ENCODE measurements at regions of chr1 and their contacts with region 1.

Region 1: GRCh38 chr1:244864253-244865027 is at the start of gene HNRNPU:
- DNase-seq: peak; percentile 98
- ATAC-seq: peak; percentile 72
- H3K4me3 Mint-ChIP-seq: peak within 1 kb of the TSS; percentile 100
- H3K27ac Mint-ChIP-seq: peak within 1 kb of the TSS; percentile 99
- H3K4me1 Mint-ChIP-seq: peaks cover 33% of the 10 kb centered on the region
- H3K27me3 Mint-ChIP-seq: no peaks in the 10 kb centered on the region
- total RNA-seq, gene HNRNPU: 521 to 532 TPM

Region 2: GRCh38 chr1:244451951-244452795 is 412.3 kb before region 1 on chr1:
- CTCF ChIA-PET with region 1: no interaction called
- POLR2A ChIA-PET with region 1: no interaction called
- intact Hi-C with region 1: loop called (anchors 1 kb)
- DNase-seq: peak; percentile 99
- ATAC-seq: peak; percentile 91
- H3K4me3 Mint-ChIP-seq: peak overlapping the region; percentile 97
- H3K27ac Mint-ChIP-seq: peak overlapping the region; percentile 97
- H3K4me1 Mint-ChIP-seq: peaks cover 40% of the 10 kb centered on the region
- H3K27me3 Mint-ChIP-seq: no peaks in the 10 kb centered on the region

Region 3: GRCh38 chr1:244896550-244896949 is 32.1 kb after region 1 on chr1:
- CTCF ChIA-PET with region 1: no interaction called
- POLR2A ChIA-PET with region 1: interaction called, 10 read pairs
- intact Hi-C with region 1: no loop called
- DNase-seq: no peak
- ATAC-seq: no peak
- H3K4me3 Mint-ChIP-seq: no peak overlapping the region
- H3K27ac Mint-ChIP-seq: no peak overlapping the region
- H3K4me1 Mint-ChIP-seq: no peaks in the 10 kb centered on the region
- H3K27me3 Mint-ChIP-seq: no peaks in the 10 kb centered on the region

Region 4: GRCh38 chr1:244980605-244981004 is 116.2 kb after region 1 on chr1:
- CTCF ChIA-PET with region 1: no interaction called
- POLR2A ChIA-PET with region 1: no interaction called
- intact Hi-C with region 1: no loop called
- DNase-seq: no peak
- ATAC-seq: no peak
- H3K4me3 Mint-ChIP-seq: no peak overlapping the region
- H3K27ac Mint-ChIP-seq: no peak overlapping the region
- H3K4me1 Mint-ChIP-seq: no peaks in the 10 kb centered on the region
- H3K27me3 Mint-ChIP-seq: no peaks in the 10 kb centered on the region

Region 5: GRCh38 chr1:245045087-245045881 is 180.8 kb after region 1 on chr1:
- CTCF ChIA-PET with region 1: interaction called, 15 read pairs
- POLR2A ChIA-PET with region 1: no interaction called
- intact Hi-C with region 1: loop called (anchors 1 to 2 kb)
- DNase-seq: no peak
- ATAC-seq: no peak
- H3K4me3 Mint-ChIP-seq: no peak overlapping the region
- H3K27ac Mint-ChIP-seq: no peak overlapping the region
- H3K4me1 Mint-ChIP-seq: no peaks in the 10 kb centered on the region
- H3K27me3 Mint-ChIP-seq: no peaks in the 10 kb centered on the region

Measured in activated CD4-positive, alpha-beta T cell treated with anti-CD3 and anti-CD28 coated beads for 36 hours (primary cell).